GM12878 (cell line): ENCODE measurements at regions of chr4 and their contacts with region 1.

Region 1: GRCh38 chr4:112099701-112100297 is 45.5 kb upstream of the FAM241A start:
- DNase-seq: peak; percentile 27
- ATAC-seq: peak; percentile 93
- H3K4me3 ChIP-seq: no peak overlapping the region
- H3K27ac ChIP-seq: no peak overlapping the region
- H3K4me1 ChIP-seq: no peaks in the 10 kb centered on the region
- H3K27me3 ChIP-seq: no peaks in the 10 kb centered on the region
- CTCF ChIP-seq: peak; percentile 35 to 66 (median 50); a peak in 5 of 6 replicates
- EP300 ChIP-seq: no peak
- POLR2A ChIP-seq: no peak
- RAD21 ChIP-seq: peak; percentile 75

Region 2: GRCh38 chr4:111977419-111977965 is 122.3 kb before region 1 on chr4:
- CTCF ChIA-PET with region 1: no interaction called
- POLR2A ChIA-PET with region 1: no interaction called
- RAD21 ChIA-PET with region 1: no interaction called
- SMC1A ChIA-PET with region 1: no interaction called
- in situ Hi-C with region 1: no loop called
- intact Hi-C with region 1: no loop called
- DNase-seq: no peak
- ATAC-seq: no peak
- H3K4me3 ChIP-seq: no peak overlapping the region
- H3K27ac ChIP-seq: no peak overlapping the region
- H3K4me1 ChIP-seq: no peaks in the 10 kb centered on the region
- H3K27me3 ChIP-seq: no peaks in the 10 kb centered on the region
- CTCF ChIP-seq: no peak
- EP300 ChIP-seq: no peak
- POLR2A ChIP-seq: no peak
- RAD21 ChIP-seq: no peak

Region 3: GRCh38 chr4:112031712-112032328 is 68.0 kb before region 1 on chr4:
- CTCF ChIA-PET with region 1: no interaction called
- POLR2A ChIA-PET with region 1: no interaction called
- RAD21 ChIA-PET with region 1: no interaction called
- SMC1A ChIA-PET with region 1: no interaction called
- in situ Hi-C with region 1: no loop called
- intact Hi-C with region 1: no loop called
- DNase-seq: peak; percentile 13
- ATAC-seq: peak; percentile 93
- H3K4me3 ChIP-seq: no peak overlapping the region
- H3K27ac ChIP-seq: no peak overlapping the region
- H3K4me1 ChIP-seq: no peaks in the 10 kb centered on the region
- H3K27me3 ChIP-seq: no peaks in the 10 kb centered on the region
- CTCF ChIP-seq: peak; percentile 53 to 81 (median 62)
- EP300 ChIP-seq: no peak
- POLR2A ChIP-seq: no peak
- RAD21 ChIP-seq: peak; percentile 86

Region 4: GRCh38 chr4:112119353-112119783 is 19.6 kb after region 1 on chr4:
- CTCF ChIA-PET with region 1: interaction called, 19 read pairs
- POLR2A ChIA-PET with region 1: no interaction called
- RAD21 ChIA-PET with region 1: no interaction called
- SMC1A ChIA-PET with region 1: interaction called, 5 read pairs
- in situ Hi-C with region 1: no loop called
- intact Hi-C with region 1: no loop called
- DNase-seq: peak; percentile 24
- ATAC-seq: peak; percentile 93
- H3K4me3 ChIP-seq: no peak overlapping the region
- H3K27ac ChIP-seq: peak overlapping the region; percentile 13; the same call in 1 of the 2 replicates
- H3K4me1 ChIP-seq: peaks cover 4% of the 10 kb centered on the region; the same call in 1 of the 2 replicates
- H3K27me3 ChIP-seq: no peaks in the 10 kb centered on the region; a peak in 1 of 4 replicates
- CTCF ChIP-seq: no peak
- EP300 ChIP-seq: no peak
- POLR2A ChIP-seq: no peak
- RAD21 ChIP-seq: no peak

Region 5: GRCh38 chr4:112214390-112215264 is 114.8 kb after region 1 on chr4:
- CTCF ChIA-PET with region 1: interaction called, 54 read pairs
- POLR2A ChIA-PET with region 1: no interaction called
- RAD21 ChIA-PET with region 1: interaction called, 4 read pairs
- SMC1A ChIA-PET with region 1: interaction called, 12 read pairs
- in situ Hi-C with region 1: no loop called
- intact Hi-C with region 1: no loop called
- DNase-seq: no peak
- ATAC-seq: peak; percentile 63; the same call in 2 of the 3 replicates
- H3K4me3 ChIP-seq: no peak overlapping the region
- H3K27ac ChIP-seq: no peak overlapping the region
- H3K4me1 ChIP-seq: no peaks in the 10 kb centered on the region
- H3K27me3 ChIP-seq: no peaks in the 10 kb centered on the region
- CTCF ChIP-seq: peak in 2 of 3 experiments; percentile 20 to 49; a peak in 4 of 6 replicates
- EP300 ChIP-seq: no peak
- POLR2A ChIP-seq: no peak
- RAD21 ChIP-seq: peak; percentile 46; the same call in 1 of the 2 replicates

Region 6: DNA sequence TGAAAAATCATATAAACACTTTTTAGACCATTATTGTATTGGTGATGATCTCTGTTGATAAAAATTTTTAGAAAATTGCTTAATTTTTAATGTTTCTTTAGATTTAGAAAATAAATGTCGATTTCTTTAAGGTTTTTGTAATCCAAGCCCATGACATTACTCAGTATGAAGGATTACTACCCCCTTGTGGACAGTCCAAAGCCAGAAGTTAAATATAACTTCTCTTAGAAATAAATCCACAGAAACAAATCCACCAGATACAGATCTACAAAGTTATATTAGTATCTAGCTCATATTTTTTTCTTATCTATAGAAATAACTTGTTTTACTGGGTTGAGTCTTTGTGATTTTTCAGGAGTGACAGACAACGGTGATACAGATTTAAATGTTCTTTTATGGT is 167.0 kb after region 1 on chr4:
- CTCF ChIA-PET with region 1: interaction called, 20 read pairs
- POLR2A ChIA-PET with region 1: no interaction called
- RAD21 ChIA-PET with region 1: interaction called, 10 read pairs
- SMC1A ChIA-PET with region 1: interaction called, 8 read pairs
- in situ Hi-C with region 1: no loop called
- intact Hi-C with region 1: no loop called
- DNase-seq: no peak
- ATAC-seq: peak; percentile 53
- H3K4me3 ChIP-seq: no peak overlapping the region
- H3K27ac ChIP-seq: no peak overlapping the region
- H3K4me1 ChIP-seq: no peaks in the 10 kb centered on the region
- H3K27me3 ChIP-seq: no peaks in the 10 kb centered on the region
- CTCF ChIP-seq: peak; percentile 26 to 43 (median 32); a peak in 3 of 6 replicates
- EP300 ChIP-seq: no peak
- POLR2A ChIP-seq: no peak
- RAD21 ChIP-seq: peak; percentile 54

Region 7: GRCh38 chr4:112515304-112516067 is 415.7 kb after region 1 on chr4:
- CTCF ChIA-PET with region 1: interaction called, 91 read pairs
- POLR2A ChIA-PET with region 1: no interaction called
- RAD21 ChIA-PET with region 1: interaction called, 14 read pairs
- SMC1A ChIA-PET with region 1: interaction called, 9 read pairs
- in situ Hi-C with region 1: loop called (anchors 5 kb)
- intact Hi-C with region 1: no loop called
- DNase-seq: no peak
- ATAC-seq: peak; percentile 65
- H3K4me3 ChIP-seq: peak overlapping the region; percentile 80
- H3K27ac ChIP-seq: peak overlapping the region; percentile 57
- H3K4me1 ChIP-seq: peaks cover 4% of the 10 kb centered on the region
- H3K27me3 ChIP-seq: peaks cover 5 to 14% of the 10 kb centered on the region in 2 experiments
- CTCF ChIP-seq: no peak
- EP300 ChIP-seq: no peak
- POLR2A ChIP-seq: peak; percentile 68
- RAD21 ChIP-seq: no peak

Region 8: DNA sequence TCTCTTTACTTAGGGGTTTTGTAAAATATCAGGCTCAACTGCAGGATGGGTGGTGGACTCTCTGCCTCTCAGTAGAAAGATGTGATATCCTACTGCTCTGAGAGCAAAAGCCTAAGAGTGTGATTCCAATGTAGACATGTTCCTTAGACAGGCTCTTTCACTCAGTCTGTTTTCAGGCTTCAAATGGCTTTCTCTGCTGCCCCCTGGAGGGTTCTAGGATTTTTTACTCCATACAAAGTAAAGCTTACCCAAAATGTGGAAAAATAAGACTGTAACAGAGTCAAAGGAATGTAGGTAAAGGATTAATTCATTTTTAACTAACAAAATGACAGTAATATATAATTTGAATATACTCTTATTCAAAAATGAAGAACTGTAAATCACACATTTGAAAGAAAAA is 504.8 kb after region 1 on chr4:
- CTCF ChIA-PET with region 1: interaction called, 21 read pairs
- POLR2A ChIA-PET with region 1: no interaction called
- RAD21 ChIA-PET with region 1: interaction called, 17 read pairs
- SMC1A ChIA-PET with region 1: interaction called, 11 read pairs
- in situ Hi-C with region 1: no loop called
- intact Hi-C with region 1: loop called (anchors 2 kb)
- DNase-seq: peak; percentile 3
- ATAC-seq: peak; percentile 92
- H3K4me3 ChIP-seq: no peak overlapping the region
- H3K27ac ChIP-seq: no peak overlapping the region
- H3K4me1 ChIP-seq: no peaks in the 10 kb centered on the region
- H3K27me3 ChIP-seq: no peaks in the 10 kb centered on the region
- CTCF ChIP-seq: peak; percentile 56 to 73 (median 65)
- EP300 ChIP-seq: no peak
- POLR2A ChIP-seq: no peak
- RAD21 ChIP-seq: peak; percentile 79